Common myeloid progenitor, CD34-positive (primary cell): ENCODE measurements at regions of chr3 and their contacts with region 1.

Region 1: DNA sequence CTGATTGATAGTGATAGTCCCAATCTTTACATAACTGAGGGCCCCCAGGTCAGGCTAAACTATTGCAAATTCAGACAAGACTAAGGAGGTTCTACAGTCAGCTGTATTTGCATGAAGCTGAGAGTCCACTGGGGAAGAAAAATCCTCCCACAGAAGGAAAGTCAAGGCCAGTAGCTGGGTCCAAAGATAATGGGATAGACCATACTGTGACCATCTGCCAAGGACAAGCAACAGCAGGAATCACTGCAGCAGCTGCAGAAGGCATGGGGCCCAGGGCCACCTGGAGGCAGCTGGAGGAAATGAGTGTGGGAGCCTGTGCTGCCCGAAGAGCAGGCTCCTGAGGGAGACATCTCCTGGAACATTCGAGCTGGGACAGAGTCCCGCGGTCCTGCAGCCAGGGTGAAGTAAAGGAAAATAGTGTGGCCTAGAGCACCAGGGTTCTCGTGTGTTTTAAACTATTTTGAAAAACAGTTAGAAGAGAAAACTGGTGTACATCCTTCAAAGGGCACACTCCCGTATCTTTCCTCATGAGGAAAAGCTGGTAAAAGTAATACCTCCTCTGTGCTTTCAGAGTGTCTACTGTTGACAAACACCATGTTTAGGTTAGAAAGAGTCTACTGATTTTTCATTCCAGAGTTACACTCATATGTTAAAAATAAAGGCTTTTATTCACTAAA is 13.2 kb upstream of the TMEM212 start:
- DNase-seq: no peak
- H3K4me3 ChIP-seq: no peak overlapping the region
- H3K27ac ChIP-seq: no peak overlapping the region
- H3K4me1 ChIP-seq: peaks cover 0 to 28% (median 3%) of the 10 kb centered on the region in 4 experiments
- H3K27me3 ChIP-seq: no peaks in the 10 kb centered on the region

Region 2: DNA sequence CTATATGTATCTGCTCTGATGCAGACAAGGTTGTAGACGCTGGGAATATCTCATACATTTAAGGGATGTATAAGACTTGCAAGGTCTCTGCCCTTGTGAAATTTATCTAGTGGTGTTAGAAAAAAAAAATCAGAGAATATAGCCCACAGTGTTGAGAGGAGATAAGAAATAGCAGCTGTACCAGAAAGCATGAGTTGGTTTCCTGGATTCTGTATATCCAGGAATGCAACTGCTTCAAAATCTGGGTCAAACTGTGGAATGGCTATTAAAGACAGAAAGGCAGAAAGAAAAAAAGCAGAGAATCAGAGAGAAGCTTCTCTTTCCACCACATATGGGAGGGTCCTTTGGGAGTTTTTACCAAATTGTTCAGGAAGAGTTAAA is 11.6 kb after region 1 on chr3:
- CTCF ChIA-PET with region 1: interaction called, 13 read pairs
- POLR2A ChIA-PET with region 1: no interaction called
- DNase-seq: peak in 2 of 3 donors; percentile 34 to 46
- H3K4me3 ChIP-seq: no peak overlapping the region
- H3K27ac ChIP-seq: no peak overlapping the region
- H3K4me1 ChIP-seq: peaks cover 0 to 10% (median 4%) of the 10 kb centered on the region in 4 experiments
- H3K27me3 ChIP-seq: no peaks in the 10 kb centered on the region

Region 3: DNA sequence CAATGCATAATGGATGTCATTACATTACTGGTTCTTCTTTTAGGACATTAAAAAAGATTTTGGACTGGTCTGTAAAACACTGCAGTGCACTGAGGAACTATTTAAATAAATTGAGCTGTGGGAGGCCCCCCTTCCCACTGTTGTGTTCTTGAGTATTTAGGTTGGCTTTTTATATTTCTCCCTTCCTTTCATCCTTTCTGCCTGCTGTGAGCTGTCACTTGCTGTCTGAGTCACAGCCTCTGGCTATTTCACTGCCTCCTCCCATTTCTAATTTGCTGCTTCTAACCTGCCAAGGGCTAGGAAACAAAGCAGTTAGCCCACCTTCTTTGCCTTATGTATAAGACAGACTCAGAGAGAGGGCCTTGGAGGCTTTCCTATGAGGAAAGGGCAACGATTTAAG is 120.4 kb after region 1 on chr3:
- CTCF ChIA-PET with region 1: no interaction called
- POLR2A ChIA-PET with region 1: no interaction called
- DNase-seq: peak in 1 of 3 donors; percentile 33
- H3K4me3 ChIP-seq: no peak overlapping the region
- H3K27ac ChIP-seq: no peak overlapping the region
- H3K4me1 ChIP-seq: peaks cover 0 to 7% (median 0%) of the 10 kb centered on the region in 4 experiments
- H3K27me3 ChIP-seq: no peaks in the 10 kb centered on the region